WTC11 (cell line): ENCODE measurements at regions of chr11 and their contacts with region 1.

Region 1: DNA sequence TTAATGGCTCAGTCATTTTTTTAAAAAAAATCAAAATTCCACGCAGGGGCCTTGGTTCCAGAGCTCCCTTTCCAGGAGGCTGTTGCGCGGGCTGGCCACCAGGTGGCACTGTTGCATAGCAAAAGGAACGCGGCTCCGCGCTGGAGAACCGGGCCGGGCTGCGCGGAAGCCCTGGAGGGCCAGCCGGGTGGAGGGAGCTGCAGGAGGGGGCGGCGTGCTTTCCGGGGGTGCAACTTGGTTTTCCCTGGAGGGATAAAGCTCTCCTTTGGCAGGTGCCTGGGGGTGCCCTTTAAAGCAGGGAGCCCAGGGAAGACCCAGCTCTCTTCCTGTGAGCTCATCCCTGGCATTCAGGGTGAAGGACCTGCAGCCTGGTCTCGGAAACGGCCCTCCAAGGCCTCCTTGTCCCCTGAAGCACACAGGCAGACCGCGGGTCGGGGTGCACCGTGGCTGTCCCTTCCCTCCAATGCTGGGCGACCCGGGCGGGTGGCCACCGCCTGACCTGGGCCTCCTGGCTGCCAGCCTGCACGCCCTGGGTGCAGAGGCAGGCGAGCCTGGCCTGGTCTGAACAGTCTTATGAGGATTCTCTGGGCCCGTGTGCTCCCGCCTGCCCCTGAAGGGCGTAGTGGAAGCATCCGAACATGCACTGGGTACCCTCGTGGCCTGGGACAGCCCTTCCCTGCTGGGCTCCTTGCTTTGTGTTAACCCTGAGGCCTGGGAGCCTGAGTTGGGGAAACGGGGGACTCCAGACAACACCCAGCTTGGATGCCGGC is 23.4 kb downstream of the KRTAP5-5 start:
- DNase-seq: peak; percentile 88
- ATAC-seq: peak; percentile 82
- H3K4me3 Mint-ChIP-seq: no peak overlapping the region
- H3K27ac Mint-ChIP-seq: no peak overlapping the region
- H3K4me1 Mint-ChIP-seq: no peaks in the 10 kb centered on the region
- H3K27me3 Mint-ChIP-seq: peaks cover 21% of the 10 kb centered on the region
- CTCF ChIP-seq: peak; percentile 99

Region 2: GRCh38 chr11:1572197-1573076 is 80.5 kb before region 1 on chr11 and contains the start of gene DUSP8:
- CTCF ChIA-PET with region 1: interaction called, 10 read pairs
- POLR2A ChIA-PET with region 1: no interaction called
- DNase-seq: peak; percentile 81
- ATAC-seq: peak; percentile 8
- H3K4me3 Mint-ChIP-seq: peak within 1 kb of the TSS; percentile 36; the same call in 1 of the 2 replicates
- H3K27ac Mint-ChIP-seq: no peak within 1 kb of the TSS
- H3K4me1 Mint-ChIP-seq: peaks cover 13% of the 10 kb centered on the region
- H3K27me3 Mint-ChIP-seq: peaks cover 66% of the 10 kb centered on the region
- CTCF ChIP-seq: no peak
- total RNA-seq, gene DUSP8: 1.7 to 2.5 TPM (median 2.4 TPM) in 3 replicates

Region 3: DNA sequence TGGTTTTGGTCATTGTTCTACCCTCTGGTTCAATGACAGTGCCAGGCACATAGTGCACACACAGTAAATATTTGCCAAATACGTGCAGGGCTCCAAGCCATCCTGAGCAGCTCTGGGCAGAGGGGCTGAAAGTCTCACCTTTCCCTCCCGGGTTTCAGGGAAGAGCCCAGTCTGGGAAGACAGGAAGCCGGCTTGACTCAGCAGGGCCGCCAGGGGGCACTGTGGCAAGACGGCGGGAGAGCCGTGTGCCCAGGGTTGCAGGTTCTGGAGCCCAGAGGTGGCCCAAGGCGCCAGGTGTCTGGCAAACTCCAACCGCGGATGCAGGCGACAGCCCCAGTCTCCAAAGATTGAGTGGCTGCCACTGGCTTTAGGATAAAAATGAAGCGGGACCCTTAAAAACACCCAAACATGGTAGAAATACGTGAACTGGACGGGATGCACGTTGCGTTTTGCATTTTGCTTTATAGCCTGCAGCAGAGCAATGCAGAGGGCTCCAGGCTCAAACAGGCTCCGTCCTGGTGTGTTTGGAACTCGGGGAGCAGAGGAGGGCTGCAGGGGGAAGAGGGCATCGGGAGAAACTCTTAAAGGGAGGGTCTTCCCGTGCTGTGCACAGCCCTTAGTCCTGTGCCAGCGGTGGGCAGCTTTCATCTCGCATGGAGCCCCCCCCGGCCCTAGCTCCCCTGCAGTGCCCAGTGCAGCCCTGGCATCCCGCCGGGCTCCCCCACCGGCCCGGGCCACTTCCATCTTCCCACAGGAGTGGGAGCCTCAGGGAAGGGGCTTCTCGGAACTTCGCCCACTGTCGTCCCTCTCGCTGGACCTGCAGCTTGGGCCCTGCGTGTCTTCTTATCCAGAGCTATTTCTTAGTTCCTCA is 12.6 kb before region 1 on chr11:
- CTCF ChIA-PET with region 1: interaction called, 57 read pairs
- POLR2A ChIA-PET with region 1: no interaction called
- DNase-seq: peak; percentile 74
- ATAC-seq: peak; percentile 94
- H3K4me3 Mint-ChIP-seq: no peak overlapping the region
- H3K27ac Mint-ChIP-seq: no peak overlapping the region
- H3K4me1 Mint-ChIP-seq: peaks cover 3% of the 10 kb centered on the region
- H3K27me3 Mint-ChIP-seq: peaks cover 4% of the 10 kb centered on the region
- CTCF ChIP-seq: peak; percentile 83

Region 4: GRCh38 chr11:1701091-1701807 is 48.3 kb after region 1 on chr11:
- CTCF ChIA-PET with region 1: interaction called, 17 read pairs
- POLR2A ChIA-PET with region 1: no interaction called
- DNase-seq: no peak
- ATAC-seq: no peak
- H3K4me3 Mint-ChIP-seq: no peak overlapping the region
- H3K27ac Mint-ChIP-seq: no peak overlapping the region
- H3K4me1 Mint-ChIP-seq: no peaks in the 10 kb centered on the region
- H3K27me3 Mint-ChIP-seq: peaks cover 43% of the 10 kb centered on the region
- CTCF ChIP-seq: no peak

Region 5: DNA sequence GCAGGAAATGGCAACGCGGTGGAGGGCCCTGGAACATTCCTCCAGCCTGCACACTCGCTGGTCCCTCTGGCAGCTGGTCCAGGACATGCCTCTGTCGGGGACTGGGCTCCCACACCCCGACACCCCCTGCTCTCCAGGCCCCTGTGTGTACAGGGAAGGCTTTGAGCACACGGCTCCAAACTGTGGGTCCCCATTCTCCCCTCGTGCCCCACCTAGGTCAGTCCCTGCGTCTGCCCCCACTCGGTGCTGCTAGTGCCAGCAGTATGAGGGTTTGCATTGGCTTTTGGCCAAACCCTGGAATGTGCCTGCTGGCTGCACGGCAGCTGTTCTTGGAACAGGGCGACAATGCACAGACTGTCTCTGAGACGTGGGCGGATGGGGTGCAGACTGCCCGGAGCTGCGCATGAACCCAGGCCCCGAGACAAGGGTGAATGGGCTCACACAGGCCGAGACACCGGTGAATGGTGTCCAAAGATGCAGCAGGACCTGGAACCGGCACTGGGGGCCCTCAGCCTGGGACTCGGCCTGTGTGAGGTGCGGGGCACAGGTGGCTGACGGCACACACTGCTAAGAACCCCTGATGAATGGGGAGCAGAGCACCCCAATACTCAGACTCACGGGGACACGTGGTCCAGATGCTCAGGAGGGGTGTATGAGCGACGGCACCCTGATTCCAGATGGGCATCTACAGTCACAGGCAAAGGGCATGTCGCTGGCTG is 174.3 kb after region 1 on chr11:
- CTCF ChIA-PET with region 1: interaction called, 190 read pairs
- POLR2A ChIA-PET with region 1: no interaction called
- DNase-seq: no peak
- ATAC-seq: no peak
- H3K4me3 Mint-ChIP-seq: no peak overlapping the region
- H3K27ac Mint-ChIP-seq: no peak overlapping the region
- H3K4me1 Mint-ChIP-seq: peaks cover 4% of the 10 kb centered on the region; the same call in 1 of the 2 replicates
- H3K27me3 Mint-ChIP-seq: no peaks in the 10 kb centered on the region; the same call in 1 of the 2 replicates
- CTCF ChIP-seq: no peak

Region 6: DNA sequence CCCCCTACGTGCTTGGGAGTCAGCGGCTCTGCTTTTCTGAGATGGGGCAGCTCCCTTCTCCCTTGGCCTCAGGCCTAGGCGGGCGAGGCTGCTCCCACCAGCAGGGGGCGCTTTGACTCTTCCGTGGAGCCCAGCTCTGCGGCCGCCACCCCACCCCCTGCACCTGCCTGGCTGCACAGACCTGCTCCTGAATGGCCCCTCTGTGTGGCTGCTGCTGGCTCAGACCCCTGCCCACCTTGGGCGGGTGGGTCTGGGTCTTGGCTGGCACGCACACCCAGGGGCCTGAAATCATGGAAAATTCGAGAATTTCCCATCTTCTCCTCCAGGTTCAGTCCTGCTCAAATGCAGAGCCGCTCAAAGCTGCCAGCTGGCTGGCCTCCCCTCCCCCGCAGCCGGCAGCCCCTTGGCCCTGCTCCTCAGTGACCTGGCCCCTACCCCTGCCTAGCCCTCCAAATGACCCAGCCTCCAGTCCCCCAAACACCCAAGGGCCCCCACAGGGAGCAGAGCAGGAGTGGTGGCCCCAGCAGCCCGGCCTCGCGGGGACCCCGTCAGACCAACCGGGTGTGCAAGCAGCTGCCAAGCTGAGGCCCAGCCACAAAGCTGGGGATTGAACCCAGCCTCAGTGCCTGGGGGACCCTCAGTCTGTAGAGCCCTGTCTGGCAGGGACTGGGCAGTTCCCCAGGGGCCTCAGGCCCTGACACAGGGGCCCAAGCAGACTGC is 229.7 kb after region 1 on chr11:
- CTCF ChIA-PET with region 1: interaction called, 30 read pairs
- POLR2A ChIA-PET with region 1: no interaction called
- DNase-seq: peak; percentile 89
- ATAC-seq: peak; percentile 97
- H3K4me3 Mint-ChIP-seq: no peak overlapping the region
- H3K27ac Mint-ChIP-seq: no peak overlapping the region
- H3K4me1 Mint-ChIP-seq: no peaks in the 10 kb centered on the region
- H3K27me3 Mint-ChIP-seq: no peaks in the 10 kb centered on the region
- CTCF ChIP-seq: peak; percentile 95

Region 7: GRCh38 chr11:2036863-2037486 is 384.0 kb after region 1 on chr11:
- CTCF ChIA-PET with region 1: interaction called, 20 read pairs
- POLR2A ChIA-PET with region 1: no interaction called
- DNase-seq: no peak
- ATAC-seq: peak; percentile 76
- H3K4me3 Mint-ChIP-seq: no peak overlapping the region
- H3K27ac Mint-ChIP-seq: no peak overlapping the region
- H3K4me1 Mint-ChIP-seq: no peaks in the 10 kb centered on the region
- H3K27me3 Mint-ChIP-seq: no peaks in the 10 kb centered on the region
- CTCF ChIP-seq: no peak